Naive thymus-derived CD8-positive, alpha-beta T cell (primary cell): ENCODE measurements at regions of chr6 and their contacts with region 1.

Region 1: DNA sequence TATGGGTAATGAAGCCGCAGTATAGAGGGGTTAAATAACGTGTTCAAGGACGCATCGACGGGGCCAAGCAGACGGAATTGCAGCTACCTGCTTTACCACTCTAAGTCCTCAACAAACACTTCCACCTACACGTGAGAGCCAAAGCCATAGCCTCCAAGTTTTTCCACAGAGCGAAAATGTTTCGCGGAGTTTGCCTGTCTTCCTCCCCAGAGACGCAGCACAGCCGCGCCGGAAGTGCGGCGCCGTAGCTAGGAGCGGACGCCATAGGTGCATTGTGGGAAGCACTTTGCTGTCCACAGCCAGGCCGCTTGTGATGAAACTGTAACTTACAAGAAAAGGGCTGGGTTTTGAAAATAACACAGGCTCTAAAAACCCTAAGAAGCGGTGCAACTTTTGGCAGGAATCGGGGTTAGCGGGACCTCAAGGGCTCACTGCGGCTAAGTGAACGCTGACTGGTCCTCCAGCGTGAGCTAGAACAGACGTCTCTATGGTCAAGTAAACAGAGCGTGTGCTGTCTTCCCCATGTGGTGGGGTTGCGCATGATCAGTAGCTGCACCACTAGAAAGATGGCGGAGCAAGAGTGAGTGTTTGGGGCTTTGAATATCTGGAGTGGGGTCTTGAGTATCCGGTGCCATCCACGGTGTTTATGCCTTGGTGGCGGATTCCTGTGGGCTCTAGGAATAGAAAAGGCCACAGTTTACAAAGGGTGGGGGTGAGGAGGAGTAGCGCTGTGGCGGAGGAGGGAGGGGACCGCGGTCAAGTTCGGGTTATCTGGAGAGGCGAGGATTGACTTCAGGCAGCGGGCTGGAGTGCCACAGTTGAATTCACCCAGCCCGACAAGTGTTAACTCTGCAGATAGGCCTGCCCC is at the start of gene RPL7L1:
- DNase-seq: peak; percentile 67 to 93 (median 83)
- ATAC-seq: peak; percentile 92 to 93
- H3K4me3 Mint-ChIP-seq: peak within 1 kb of the TSS; percentile 92 to 100 (median 97)
- H3K27ac Mint-ChIP-seq: peak within 1 kb of the TSS; percentile 98 to 100 (median 100)
- H3K4me1 Mint-ChIP-seq: peaks cover 9 to 37% (median 35%) of the 10 kb centered on the region in 4 donors
- H3K27me3 Mint-ChIP-seq: no peaks in the 10 kb centered on the region
- polyA plus RNA-seq, gene RPL7L1: 65.3 to 87.9 (median 67.4) TPM

Region 2: DNA sequence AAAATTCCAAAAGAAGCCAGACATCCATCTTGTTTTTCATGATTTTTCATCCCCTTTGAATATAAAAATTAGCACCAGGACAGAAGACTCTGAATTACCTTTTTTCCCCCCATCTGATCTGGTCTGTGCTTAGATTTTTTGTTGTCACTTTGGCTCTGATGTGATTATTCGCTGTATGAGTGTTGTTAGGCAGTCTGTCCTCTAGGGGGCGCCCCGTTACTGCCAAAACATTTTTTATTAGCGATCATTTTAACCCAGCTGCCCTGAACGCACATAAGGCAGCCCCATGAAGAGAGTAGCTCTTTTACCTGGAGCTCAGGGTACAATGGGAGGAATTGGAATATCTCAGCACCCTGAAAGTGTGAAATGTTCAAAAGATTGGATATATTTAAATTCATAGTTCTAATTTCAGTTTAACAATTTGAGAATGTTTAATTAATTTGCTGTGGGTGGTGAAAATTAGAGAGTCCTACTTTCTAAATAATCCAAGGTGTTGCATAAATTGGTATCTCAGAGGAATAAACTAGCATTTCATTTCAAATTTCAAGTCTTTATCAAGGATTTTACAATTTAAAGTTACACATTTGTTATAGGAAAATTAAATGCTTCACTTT is 218.0 kb before region 1 on chr6:
- POLR2A ChIA-PET with region 1: interaction called, 13 read pairs
- DNase-seq: peak; percentile 69 to 93 (median 83)
- ATAC-seq: peak; percentile 93 to 96
- H3K4me3 Mint-ChIP-seq: no peak overlapping the region
- H3K27ac Mint-ChIP-seq: peak overlapping the region in 8 of 10 donors; percentile 2 to 62 (median 32)
- H3K4me1 Mint-ChIP-seq: peaks cover 0 to 4% (median 0%) of the 10 kb centered on the region in 4 donors
- H3K27me3 Mint-ChIP-seq: no peaks in the 10 kb centered on the region

Region 3: GRCh38 chr6:42692137-42692911 is 187.3 kb before region 1 on chr6:
- POLR2A ChIA-PET with region 1: interaction called, 10 read pairs
- DNase-seq: no peak
- ATAC-seq: peak in 1 of 2 donors; percentile 11
- H3K4me3 Mint-ChIP-seq: peak overlapping the region in 3 of 10 donors; percentile 4 to 61 (median 44)
- H3K27ac Mint-ChIP-seq: peak overlapping the region; percentile 48 to 96 (median 90)
- H3K4me1 Mint-ChIP-seq: peaks cover 26 to 55% (median 47%) of the 10 kb centered on the region in 4 donors
- H3K27me3 Mint-ChIP-seq: no peaks in the 10 kb centered on the region

Region 4: DNA sequence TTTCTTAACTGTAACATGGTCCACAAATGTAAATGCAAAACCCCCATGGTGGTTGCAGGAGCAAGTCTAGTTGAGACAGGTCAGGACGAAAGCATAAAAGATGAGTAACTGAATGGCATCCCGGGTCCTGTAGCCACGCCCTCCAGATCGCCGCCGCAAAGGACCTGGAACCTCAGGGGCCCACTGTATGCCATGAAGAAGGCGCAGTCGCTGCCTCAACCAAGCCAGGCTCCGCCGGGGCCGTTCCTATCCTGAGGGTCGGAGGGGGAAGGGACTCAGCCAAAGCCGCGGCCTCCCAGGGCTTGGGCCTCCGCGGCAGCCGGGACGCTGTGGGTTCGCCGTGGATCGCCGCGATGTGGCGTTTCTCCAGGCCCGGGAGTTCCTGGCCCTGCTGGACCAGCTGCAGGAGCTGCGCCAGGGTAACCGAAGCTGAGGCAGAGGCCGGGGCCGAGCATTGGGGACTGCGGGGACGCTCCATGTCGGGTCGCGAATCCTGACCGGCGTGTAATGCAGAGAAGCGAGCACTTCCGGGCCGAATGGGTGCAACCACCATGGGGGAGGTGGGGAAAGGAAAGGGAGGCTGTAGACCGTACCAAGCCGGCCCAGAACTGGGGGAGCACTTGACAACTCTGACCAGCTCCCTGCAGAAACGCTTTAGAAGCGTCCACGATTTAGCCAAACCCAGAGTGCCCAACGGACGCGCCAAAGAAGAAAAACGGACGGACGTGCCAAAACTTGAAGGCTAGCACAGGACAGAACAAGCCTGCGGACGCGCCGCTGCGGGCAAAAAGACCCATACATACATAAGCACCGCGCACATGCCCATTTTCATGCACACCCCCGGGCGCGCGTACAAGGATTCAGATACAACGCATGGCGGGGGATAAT is 10.9 kb after region 1 on chr6:
- POLR2A ChIA-PET with region 1: interaction called, 85 read pairs
- DNase-seq: peak; percentile 69 to 94 (median 85)
- ATAC-seq: peak; percentile 87 to 94
- H3K4me3 Mint-ChIP-seq: peak overlapping the region; percentile 92 to 99 (median 98)
- H3K27ac Mint-ChIP-seq: peak overlapping the region; percentile 92 to 98 (median 96)
- H3K4me1 Mint-ChIP-seq: peaks cover 7 to 37% (median 19%) of the 10 kb centered on the region in 4 donors
- H3K27me3 Mint-ChIP-seq: no peaks in the 10 kb centered on the region

Region 5: GRCh38 chr6:42938987-42939809 is 59.6 kb after region 1 on chr6:
- POLR2A ChIA-PET with region 1: no interaction called
- DNase-seq: no peak
- ATAC-seq: no peak
- H3K4me3 Mint-ChIP-seq: no peak overlapping the region
- H3K27ac Mint-ChIP-seq: peak overlapping the region in 4 of 10 donors; percentile 22 to 83 (median 44)
- H3K4me1 Mint-ChIP-seq: peaks cover 11 to 44% (median 20%) of the 10 kb centered on the region in 4 donors
- H3K27me3 Mint-ChIP-seq: no peaks in the 10 kb centered on the region